ENCODE measurements at regions of chr12 and their contacts with region 1.

Region 1: DNA sequence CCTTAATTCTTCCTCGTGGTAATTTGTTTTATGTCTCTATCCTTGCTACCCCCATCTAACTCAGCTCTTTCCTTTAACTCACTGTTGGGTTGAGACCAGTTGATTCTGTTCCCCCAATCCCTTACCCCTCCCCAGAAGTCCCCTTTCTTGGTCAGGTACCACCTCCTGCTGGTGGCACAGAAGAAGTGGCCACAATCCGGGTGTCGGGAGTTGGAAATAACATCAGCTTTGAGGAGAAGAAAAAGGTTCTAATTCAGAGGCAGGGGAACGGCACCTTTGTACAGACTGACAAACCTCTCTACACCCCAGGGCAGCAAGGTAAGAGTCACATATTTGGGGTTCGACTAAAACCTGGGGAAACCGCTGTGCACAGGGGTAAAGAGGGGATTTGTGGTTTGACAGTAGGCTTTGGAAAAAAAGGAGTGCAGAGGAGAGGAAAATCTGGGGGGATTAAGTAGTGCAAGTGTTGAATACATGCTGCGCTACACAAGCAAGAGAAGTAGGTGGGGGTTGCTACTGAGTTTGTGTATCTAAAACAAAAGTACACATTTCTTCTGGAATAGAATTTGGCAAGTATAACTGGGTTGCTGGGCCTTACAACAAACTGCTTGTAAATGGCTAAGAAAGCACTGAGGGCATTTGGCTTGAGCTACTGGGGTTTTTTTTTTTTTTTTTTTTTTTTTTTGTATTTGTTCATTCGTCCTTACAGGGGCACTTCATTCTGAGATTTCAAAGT is 1.3 kb downstream of the A2ML1 start:
- DNase-seq: peak in 1 of 2 experiments; percentile 84
- H3K4me3 ChIP-seq: peak overlapping the region; percentile 13 to 49 (median 26); a peak in 6 of 8 replicates
- H3K27ac ChIP-seq: no peak overlapping the region
- H3K4me1 ChIP-seq: peaks cover 5 to 20% (median 14%) of the 10 kb centered on the region in 4 experiments
- H3K27me3 ChIP-seq: no peaks in the 10 kb centered on the region
- CTCF ChIP-seq: peak; percentile 81 to 93 (median 89)
- EP300 ChIP-seq: no peak
- POLR2A ChIP-seq: no peak
- RAD21 ChIP-seq: peak; percentile 99 to 100

Region 2: DNA sequence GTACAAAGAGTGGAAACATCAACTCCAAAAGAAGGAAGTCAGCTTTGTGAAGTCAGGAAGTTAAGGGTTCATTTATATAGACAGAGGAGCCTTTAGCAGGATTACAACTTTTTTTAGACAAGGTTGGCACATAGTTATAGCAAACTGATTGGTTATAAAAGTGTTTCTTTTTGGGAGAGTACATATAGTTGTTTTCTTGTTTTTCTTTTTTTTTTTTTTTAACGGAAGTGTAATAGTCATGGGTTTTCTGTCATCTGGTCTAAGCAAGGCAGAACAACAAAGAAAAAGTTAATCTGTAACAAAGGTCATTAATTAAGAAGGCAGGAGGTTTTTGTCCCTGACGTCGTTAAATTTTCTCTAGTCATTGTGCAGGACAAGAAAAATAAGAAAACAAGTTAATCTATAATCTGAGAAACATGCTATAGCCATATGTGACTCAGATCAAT is 148.1 kb before region 1 on chr12:
- CTCF ChIA-PET with region 1: interaction called, 43 read pairs
- POLR2A ChIA-PET with region 1: interaction called, 4 read pairs
- DNase-seq: no peak
- H3K4me3 ChIP-seq: no peak overlapping the region
- H3K27ac ChIP-seq: no peak overlapping the region
- H3K4me1 ChIP-seq: peaks cover 0 to 4% (median 0%) of the 10 kb centered on the region in 4 experiments; a peak in 1 of 7 replicates
- H3K27me3 ChIP-seq: no peaks in the 10 kb centered on the region
- CTCF ChIP-seq: no peak
- EP300 ChIP-seq: no peak
- POLR2A ChIP-seq: no peak
- RAD21 ChIP-seq: no peak

Region 3: DNA sequence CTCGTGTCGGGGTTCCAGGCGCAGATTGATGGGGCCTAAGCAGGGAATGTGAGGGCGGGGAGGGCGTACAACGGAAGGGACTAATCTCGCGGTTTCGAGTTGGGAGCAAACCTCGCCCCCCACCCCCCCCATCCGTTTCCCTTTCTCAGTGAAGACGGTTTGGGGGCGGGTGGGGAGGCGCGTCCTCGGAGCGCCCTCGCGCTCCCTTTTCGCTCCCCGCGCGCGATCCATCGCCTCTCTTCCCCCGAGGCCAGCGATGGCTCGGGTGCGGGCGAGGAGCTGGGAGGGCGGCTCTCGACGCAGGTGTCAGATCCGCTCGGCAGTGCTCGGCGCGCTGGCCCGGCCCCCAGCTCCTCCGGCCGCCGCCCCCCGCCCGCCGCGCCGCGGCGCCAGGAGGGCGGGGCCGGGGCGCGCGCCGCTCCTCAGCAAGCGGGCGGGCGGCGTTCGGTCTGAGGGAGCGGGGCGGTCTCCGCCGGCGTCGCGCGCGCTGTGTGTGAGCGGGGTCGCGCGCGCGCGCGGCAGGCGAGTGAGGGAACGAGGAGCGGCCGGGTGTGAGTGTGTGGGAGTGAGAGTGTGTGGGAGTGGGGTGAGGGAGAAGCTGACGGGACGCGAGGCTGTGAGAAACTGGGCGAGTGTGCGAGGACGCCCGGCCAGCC is 126.1 kb before region 1 on chr12 and contains the start of gene RIMKLB:
- CTCF ChIA-PET with region 1: interaction called, 4 read pairs
- POLR2A ChIA-PET with region 1: interaction called, 10 read pairs
- DNase-seq: peak in 1 of 2 experiments; percentile 82
- H3K4me3 ChIP-seq: peak within 1 kb of the TSS; percentile 72 to 92 (median 80)
- H3K27ac ChIP-seq: peak within 1 kb of the TSS; percentile 92
- H3K4me1 ChIP-seq: peaks cover 2 to 9% (median 5%) of the 10 kb centered on the region in 4 experiments; a peak in 4 of 7 replicates
- H3K27me3 ChIP-seq: no peaks in the 10 kb centered on the region
- CTCF ChIP-seq: no peak
- EP300 ChIP-seq: no peak
- POLR2A ChIP-seq: peak in 1 of 2 experiments; percentile 19; a peak in 2 of 3 replicates
- RAD21 ChIP-seq: no peak
- total RNA-seq, gene RIMKLB: 75.7 and 78.2 TPM in 2 replicates

Region 4: GRCh38 chr12:8780389-8780788 is 43.3 kb before region 1 on chr12:
- CTCF ChIA-PET with region 1: interaction called, 25 read pairs
- POLR2A ChIA-PET with region 1: interaction called, 5 read pairs
- DNase-seq: no peak
- H3K4me3 ChIP-seq: no peak overlapping the region
- H3K27ac ChIP-seq: no peak overlapping the region
- H3K4me1 ChIP-seq: no peaks in the 10 kb centered on the region
- H3K27me3 ChIP-seq: no peaks in the 10 kb centered on the region
- CTCF ChIP-seq: peak in 2 of 3 experiments; percentile 44 to 58; a peak in 2 of 4 replicates
- EP300 ChIP-seq: no peak
- POLR2A ChIP-seq: no peak
- RAD21 ChIP-seq: peak; percentile 61 to 68

Region 5: DNA sequence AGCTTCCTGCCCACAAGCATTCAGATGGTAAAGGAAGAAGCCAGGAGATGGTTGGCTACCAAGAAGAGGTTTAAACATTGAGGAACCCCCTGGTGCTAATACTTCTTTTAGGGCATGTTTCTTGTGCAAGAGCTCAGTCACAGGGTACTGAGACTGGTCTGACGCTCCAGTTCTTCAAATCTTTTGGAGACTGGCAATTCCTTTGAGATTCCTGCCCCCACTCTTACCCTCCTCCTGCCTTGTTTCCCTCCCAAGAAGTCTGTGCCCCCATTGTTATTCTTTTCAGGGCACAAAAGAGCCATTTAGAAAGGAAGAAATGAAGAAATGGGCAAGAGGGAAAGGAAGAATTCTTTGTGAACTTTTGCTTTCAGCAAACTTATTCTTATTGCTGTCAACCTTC is 10.5 kb after region 1 on chr12:
- CTCF ChIA-PET with region 1: interaction called, 13 read pairs
- POLR2A ChIA-PET with region 1: interaction called, 6 read pairs
- DNase-seq: no peak
- H3K4me3 ChIP-seq: no peak overlapping the region; a peak in 1 of 8 replicates
- H3K27ac ChIP-seq: no peak overlapping the region
- H3K4me1 ChIP-seq: peaks cover 4 to 17% (median 12%) of the 10 kb centered on the region in 4 experiments; a peak in 5 of 7 replicates
- H3K27me3 ChIP-seq: no peaks in the 10 kb centered on the region
- CTCF ChIP-seq: no peak
- EP300 ChIP-seq: no peak
- POLR2A ChIP-seq: no peak
- RAD21 ChIP-seq: no peak